BJ (cell line): ENCODE measurements at regions of chr3 and their contacts with region 1.

Region 1: DNA sequence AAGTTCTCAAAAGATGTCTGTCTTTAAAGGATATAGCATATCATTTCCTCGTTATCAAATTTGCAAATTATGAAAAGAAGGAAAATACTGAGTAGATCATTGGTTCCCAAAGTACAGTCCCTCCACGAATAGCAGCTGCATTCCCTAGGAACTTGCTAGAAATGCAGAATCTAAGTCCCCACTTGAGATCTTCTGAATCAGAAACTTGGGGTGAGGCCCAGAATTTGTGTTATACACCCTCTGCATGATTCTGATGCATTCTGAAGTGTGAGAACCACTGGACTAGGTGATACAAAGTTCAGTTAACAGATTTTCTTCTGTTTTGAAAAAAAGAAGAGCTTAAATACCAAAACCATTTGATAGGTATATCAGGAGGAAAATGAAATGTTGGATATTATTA is 77.1 kb downstream of the SLC25A26 start:
- DNase-seq: no peak
- H3K4me3 ChIP-seq: no peak overlapping the region
- H3K27me3 ChIP-seq: no peaks in the 10 kb centered on the region
- CTCF ChIP-seq: no peak

Region 2: GRCh38 chr3:66326340-66326739 is 28.4 kb after region 1 on chr3:
- CTCF ChIA-PET with region 1: no interaction called
- POLR2A ChIA-PET with region 1: no interaction called
- DNase-seq: no peak
- H3K4me3 ChIP-seq: no peak overlapping the region
- H3K27me3 ChIP-seq: no peaks in the 10 kb centered on the region
- CTCF ChIP-seq: no peak

Region 3: GRCh38 chr3:66655671-66656070 is 357.8 kb after region 1 on chr3:
- CTCF ChIA-PET with region 1: no interaction called
- POLR2A ChIA-PET with region 1: interaction called, 12 read pairs
- DNase-seq: no peak
- H3K4me3 ChIP-seq: no peak overlapping the region
- H3K27me3 ChIP-seq: peaks cover 5% of the 10 kb centered on the region; the same call in 1 of the 2 replicates
- CTCF ChIP-seq: no peak